Mammary epithelial cell (primary cell): ENCODE measurements at regions of chr7 and their contacts with region 1.

Region 1: DNA sequence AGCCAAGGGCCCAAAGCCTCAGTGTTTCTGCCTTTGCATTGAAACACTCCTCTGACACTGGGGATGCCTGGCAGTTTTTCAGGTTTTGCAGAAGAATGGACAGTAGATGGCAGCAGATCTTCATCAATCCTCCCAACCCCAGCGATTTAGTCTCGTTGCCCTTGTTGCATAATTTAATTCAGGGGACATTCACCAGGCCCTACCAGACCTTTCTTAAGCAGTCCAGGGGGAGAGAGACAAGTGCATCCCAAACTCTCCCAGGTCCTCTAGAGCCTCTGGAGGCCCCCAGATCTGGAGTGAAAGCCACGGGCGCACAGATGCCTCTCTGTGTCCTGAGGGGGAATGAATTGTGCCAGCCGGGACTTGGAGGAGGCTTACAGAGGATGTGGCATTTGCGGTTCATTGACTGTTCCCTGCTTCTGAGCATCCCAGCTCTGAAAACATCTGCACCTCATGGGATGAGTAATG is 29.6 kb downstream of the MINDY4 start:
- DNase-seq: peak; percentile 86
- H3K4me3 ChIP-seq: no peak overlapping the region
- H3K27ac ChIP-seq: peak overlapping the region; percentile 24
- H3K4me1 ChIP-seq: peaks cover 75% of the 10 kb centered on the region
- H3K27me3 ChIP-seq: no peaks in the 10 kb centered on the region
- CTCF ChIP-seq: peak; percentile 71 to 72

Region 2: GRCh38 chr7:30612658-30613265 is 188.1 kb before region 1 on chr7:
- CTCF ChIA-PET with region 1: no interaction called
- dilution Hi-C with region 1: no loop called
- in situ Hi-C with region 1: no loop called
- intact Hi-C with region 1: no loop called
- DNase-seq: peak; percentile 65
- H3K4me3 ChIP-seq: no peak overlapping the region
- H3K27ac ChIP-seq: peak overlapping the region; percentile 3
- H3K4me1 ChIP-seq: peaks cover 4% of the 10 kb centered on the region
- H3K27me3 ChIP-seq: no peaks in the 10 kb centered on the region
- CTCF ChIP-seq: no peak

Region 3: DNA sequence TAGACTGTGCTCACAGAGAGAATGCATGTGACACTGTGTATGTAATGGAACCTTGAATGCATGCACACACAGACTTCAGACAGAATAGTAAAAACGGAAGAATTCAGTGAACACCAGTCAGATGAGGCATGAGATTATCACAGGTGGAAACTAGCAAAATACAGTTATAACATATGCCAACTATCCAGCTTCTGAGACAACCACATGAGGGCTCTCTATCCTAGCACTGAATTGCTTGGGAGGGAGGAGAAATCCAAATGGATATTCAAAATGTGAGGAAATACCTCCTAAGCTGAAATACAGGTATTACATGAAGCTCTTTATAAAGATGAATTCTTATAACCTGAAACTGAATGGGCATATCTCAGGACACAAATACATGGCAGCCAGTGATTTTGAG is 175.5 kb before region 1 on chr7:
- CTCF ChIA-PET with region 1: no interaction called
- dilution Hi-C with region 1: no loop called
- in situ Hi-C with region 1: no loop called
- intact Hi-C with region 1: no loop called
- DNase-seq: no peak
- H3K4me3 ChIP-seq: no peak overlapping the region
- H3K27ac ChIP-seq: no peak overlapping the region
- H3K4me1 ChIP-seq: no peaks in the 10 kb centered on the region
- H3K27me3 ChIP-seq: no peaks in the 10 kb centered on the region
- CTCF ChIP-seq: no peak

Region 4: GRCh38 chr7:30771880-30772425 is 28.9 kb before region 1 on chr7:
- CTCF ChIA-PET with region 1: no interaction called
- dilution Hi-C with region 1: no loop called
- in situ Hi-C with region 1: no loop called
- intact Hi-C with region 1: loop called (anchors 2 kb)
- DNase-seq: no peak
- H3K4me3 ChIP-seq: peak overlapping the region; percentile 56 to 75 (median 62)
- H3K27ac ChIP-seq: peak overlapping the region; percentile 76
- H3K4me1 ChIP-seq: peaks cover 10% of the 10 kb centered on the region
- H3K27me3 ChIP-seq: no peaks in the 10 kb centered on the region
- CTCF ChIP-seq: no peak

Region 5: GRCh38 chr7:30974605-30975255 is 173.9 kb after region 1 on chr7:
- CTCF ChIA-PET with region 1: no interaction called
- dilution Hi-C with region 1: no loop called
- in situ Hi-C with region 1: loop called (anchors 5 kb)
- intact Hi-C with region 1: loop called (anchors 1 kb)
- DNase-seq: peak; percentile 76
- H3K4me3 ChIP-seq: no peak overlapping the region
- H3K27ac ChIP-seq: no peak overlapping the region
- H3K4me1 ChIP-seq: no peaks in the 10 kb centered on the region
- H3K27me3 ChIP-seq: no peaks in the 10 kb centered on the region
- CTCF ChIP-seq: peak; percentile 89 to 93

Region 6: GRCh38 chr7:31096877-31097258 is 296.0 kb after region 1 on chr7:
- CTCF ChIA-PET with region 1: no interaction called
- dilution Hi-C with region 1: no loop called
- in situ Hi-C with region 1: no loop called
- intact Hi-C with region 1: no loop called
- DNase-seq: no peak
- H3K4me3 ChIP-seq: no peak overlapping the region
- H3K27ac ChIP-seq: no peak overlapping the region
- H3K4me1 ChIP-seq: no peaks in the 10 kb centered on the region
- H3K27me3 ChIP-seq: peaks cover 4% of the 10 kb centered on the region
- CTCF ChIP-seq: no peak

Region 7: DNA sequence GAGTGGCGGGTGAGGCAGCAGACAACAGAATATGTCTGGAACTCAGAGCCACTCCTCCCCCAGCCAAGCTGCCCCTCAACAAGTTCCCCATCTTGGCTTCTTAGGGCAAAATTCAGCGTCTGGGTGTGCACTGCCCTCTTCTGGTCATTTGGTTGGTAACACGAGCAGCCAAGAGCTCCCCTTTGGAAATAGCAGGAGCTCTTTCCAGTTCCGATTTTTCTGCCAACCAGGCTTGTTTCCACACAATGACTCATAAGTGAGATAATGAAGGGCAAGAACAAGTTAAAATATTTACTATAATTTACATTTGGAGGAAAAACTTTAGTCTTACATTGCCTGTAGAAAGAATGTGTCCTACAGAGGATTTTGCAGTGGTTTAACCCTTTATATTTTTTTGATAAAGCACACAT is 321.8 kb after region 1 on chr7:
- CTCF ChIA-PET with region 1: interaction called, 7 read pairs
- dilution Hi-C with region 1: no loop called
- in situ Hi-C with region 1: loop called (anchors 5 kb)
- intact Hi-C with region 1: loop called (anchors 1 kb)
- DNase-seq: peak; percentile 63
- H3K4me3 ChIP-seq: no peak overlapping the region
- H3K27ac ChIP-seq: no peak overlapping the region
- H3K4me1 ChIP-seq: no peaks in the 10 kb centered on the region
- H3K27me3 ChIP-seq: peaks cover 5% of the 10 kb centered on the region
- CTCF ChIP-seq: peak; percentile 89 to 91